GM18951 (cell line): ENCODE measurements at regions of chr5 and their contacts with region 1.

Region 1: DNA sequence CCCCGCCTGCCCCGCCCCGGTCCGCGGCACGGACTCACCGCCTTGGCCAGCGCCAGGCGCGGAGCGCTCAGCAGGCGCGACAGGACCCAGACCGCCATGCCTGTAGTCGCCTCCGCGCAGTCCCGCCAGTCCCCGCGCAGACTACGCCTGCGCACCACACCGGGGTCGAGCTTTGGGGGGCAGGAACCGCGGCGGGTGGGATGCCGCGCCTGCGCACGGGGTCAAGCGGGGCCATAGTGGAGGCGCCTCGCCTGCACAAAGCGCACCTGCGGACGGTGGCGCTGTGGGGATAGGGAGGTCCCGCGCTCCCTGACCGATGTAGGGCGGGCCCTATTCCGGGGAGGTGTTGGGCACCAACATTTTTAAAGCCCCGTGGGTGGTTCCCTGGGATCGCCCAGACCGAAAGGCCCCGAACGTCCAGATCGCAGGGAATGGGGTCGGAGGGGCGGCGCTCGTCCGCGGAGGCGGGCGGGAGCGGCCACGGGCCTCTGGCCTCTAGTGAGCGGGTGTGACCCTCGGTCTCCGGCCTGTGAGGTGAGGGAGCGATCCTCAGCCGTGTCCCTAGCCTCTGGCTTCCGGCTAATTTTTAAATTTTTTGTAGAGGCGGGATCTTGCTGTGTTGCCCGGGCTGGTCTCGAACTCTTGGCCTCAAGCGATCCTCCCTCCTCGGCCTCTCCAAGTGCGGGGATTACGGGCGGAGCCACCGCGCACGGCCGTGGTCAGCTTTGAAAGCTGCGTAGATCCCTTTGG is 70.8 kb upstream of the LPCAT1 start:
- POLR2A ChIP-seq: peak; percentile 79

Region 2: DNA sequence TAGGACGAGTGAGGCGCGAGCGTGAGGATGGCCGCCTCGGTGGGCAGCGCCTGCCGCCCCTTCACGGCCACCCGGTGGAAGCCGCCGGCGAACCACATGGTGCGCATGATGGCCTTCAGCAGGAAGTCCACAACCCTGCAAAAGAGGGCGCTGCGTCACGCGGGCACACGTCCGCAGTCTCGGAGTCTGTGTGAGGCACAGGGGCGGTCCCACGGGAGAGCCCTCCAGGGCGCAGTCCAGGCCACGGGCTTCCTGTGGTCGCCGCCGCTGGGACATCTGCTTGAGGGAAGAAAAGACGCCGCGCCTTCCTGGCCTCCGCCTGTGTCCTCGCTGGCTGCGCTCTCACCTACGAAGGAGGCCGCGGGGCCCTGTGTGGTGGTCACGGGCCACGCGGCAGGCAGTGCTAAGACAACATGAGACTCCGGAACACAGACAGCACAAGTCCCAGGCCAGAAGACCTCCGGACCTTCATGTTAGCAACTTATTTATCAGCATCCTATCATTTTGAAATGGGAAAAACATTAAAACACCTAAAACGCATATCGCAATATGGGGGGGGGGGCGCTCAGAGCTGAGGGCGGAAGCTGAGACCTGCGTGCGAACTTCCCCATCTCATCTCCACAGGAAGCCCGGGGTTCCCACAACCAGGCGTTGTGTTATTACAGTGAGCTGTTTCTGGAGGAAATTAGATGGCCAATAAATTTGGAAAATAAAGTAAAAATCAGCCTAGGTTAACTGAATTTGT is 99.6 kb before region 1 on chr5:
- in situ Hi-C with region 1: loop called (anchors 10 kb)
- POLR2A ChIP-seq: peak; percentile 67

Region 3: GRCh38 chr5:1910081-1910760 is 315.7 kb after region 1 on chr5:
- in situ Hi-C with region 1: no loop called
- POLR2A ChIP-seq: no peak